Activated T-helper 2 cell treated with anti-CD3 and anti-CD28 coated beads, Interferon-gamma antibody, Interleukin-2, Interleukin-4, amounts not matched to agents 10 μg/mL and 5 μg/mL and 100 μg/mL, durations not matched to agents 14 hours and 24 hours and 36 hours (primary cell): ENCODE measurements at regions of chr9 and their contacts with region 1.

Region 1: DNA sequence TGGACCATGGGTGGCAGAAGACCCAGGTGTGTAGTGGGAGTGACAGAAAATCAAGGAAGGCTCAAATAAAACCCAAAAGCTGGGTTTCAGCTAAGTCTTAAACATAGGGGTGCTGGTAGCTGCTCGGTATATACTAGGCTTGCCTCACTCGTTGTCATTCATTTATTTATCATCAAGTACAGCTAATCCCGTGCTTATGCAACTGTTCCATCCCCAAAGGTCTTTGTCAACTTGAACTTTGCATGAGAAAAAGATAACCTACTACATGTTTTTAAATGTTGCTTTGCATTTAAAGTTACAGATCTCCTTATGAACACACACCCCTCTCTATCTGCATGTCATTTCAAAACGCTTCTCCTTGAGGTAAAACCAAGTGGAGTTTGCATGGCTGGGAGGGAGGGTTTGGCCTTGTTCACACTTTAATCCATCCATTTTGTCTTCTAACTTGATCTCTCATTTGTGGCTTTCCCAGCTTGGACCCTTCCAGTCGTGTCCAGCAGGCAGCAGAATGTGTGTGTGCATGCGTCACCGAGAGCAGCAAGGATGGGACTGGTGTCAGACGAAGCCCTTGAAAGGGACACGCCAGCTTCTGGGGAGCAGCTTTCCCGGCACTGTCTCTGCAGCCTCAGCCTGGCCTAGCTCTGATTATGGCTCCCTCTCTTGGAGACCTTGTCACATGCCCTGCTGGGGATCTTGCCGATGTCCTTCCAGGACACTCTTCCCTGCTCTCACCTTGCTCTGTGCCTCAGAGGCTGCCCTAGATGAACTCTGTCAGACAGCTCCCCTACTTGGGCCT is 133.5 kb downstream of the GADD45G start:
- DNase-seq: no peak
- H3K4me3 Mint-ChIP-seq: no peak overlapping the region
- H3K27ac Mint-ChIP-seq: peak overlapping the region; percentile 90
- H3K4me1 Mint-ChIP-seq: peaks cover 64% of the 10 kb centered on the region
- H3K27me3 Mint-ChIP-seq: no peaks in the 10 kb centered on the region

Region 2: DNA sequence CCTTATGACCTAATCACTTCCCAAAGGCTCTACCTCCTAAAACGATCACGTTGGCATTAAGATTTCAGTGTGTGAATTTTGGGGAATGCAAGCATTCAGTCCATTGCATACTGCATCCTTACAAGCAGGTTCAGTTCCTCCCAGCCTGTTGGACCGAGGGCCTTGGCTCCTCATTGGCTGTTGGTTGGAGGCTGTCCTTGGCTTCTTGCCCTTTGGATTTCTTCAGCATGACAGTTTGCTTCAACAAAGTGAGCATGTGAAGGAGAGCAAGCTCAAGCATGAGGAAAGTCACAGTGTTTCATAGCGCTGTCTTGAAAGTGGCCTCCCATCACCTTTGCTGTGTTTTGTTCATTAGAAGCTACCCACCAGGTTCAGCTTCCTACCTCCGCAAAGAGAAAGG is 24.0 kb before region 1 on chr9:
- intact Hi-C with region 1: loop called (anchors 2 kb)
- DNase-seq: no peak
- H3K4me3 Mint-ChIP-seq: no peak overlapping the region
- H3K27ac Mint-ChIP-seq: no peak overlapping the region
- H3K4me1 Mint-ChIP-seq: peaks cover 47% of the 10 kb centered on the region
- H3K27me3 Mint-ChIP-seq: no peaks in the 10 kb centered on the region